Activated naive CD4-positive, alpha-beta T cell treated with anti-CD3 and anti-CD28 coated beads for 36 hours (primary cell): ENCODE measurements at regions of chr11 and their contacts with region 1.

Region 1: DNA sequence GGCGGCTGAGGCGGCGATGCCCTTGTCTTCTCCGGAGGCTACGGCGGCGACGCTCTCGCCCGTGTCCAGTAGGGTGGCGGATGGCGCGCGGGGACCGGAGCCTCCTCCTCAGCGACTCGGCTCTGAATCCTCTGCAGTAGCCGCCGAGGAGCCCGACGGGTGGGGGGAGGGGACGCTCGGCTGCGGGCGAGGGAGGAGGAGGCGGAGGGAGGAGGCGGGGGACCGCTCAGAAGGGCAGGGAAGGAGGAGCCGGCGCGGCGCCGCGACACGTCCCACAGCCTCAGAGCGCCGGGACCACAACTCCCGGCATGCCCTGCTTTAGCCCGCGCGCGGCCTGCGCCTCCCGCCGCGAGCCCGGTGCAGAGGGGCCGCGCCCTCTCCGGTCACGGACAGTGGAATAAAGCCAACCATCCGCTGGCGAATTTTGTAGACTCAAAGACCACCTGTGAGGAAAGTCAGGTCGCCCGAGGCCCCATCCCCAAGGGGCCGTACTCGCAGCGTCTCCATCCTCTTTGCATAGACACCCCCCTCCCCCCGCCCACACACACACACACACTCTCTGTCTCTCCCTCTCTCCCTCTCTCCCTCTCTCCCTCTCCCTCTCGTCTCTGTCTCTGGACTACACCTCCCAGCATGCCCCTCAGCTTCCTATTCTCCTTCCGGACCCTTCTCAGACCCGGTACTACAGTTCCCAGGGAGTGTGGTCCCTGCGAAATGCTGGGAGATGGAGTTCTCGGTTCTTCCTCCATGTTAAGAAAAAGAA is at the start of gene FAM168A:
- DNase-seq: peak; percentile 95
- H3K4me3 Mint-ChIP-seq: peak within 1 kb of the TSS; percentile 90
- H3K27ac Mint-ChIP-seq: peak within 1 kb of the TSS; percentile 84
- H3K4me1 Mint-ChIP-seq: peaks cover 30% of the 10 kb centered on the region
- H3K27me3 Mint-ChIP-seq: no peaks in the 10 kb centered on the region
- total RNA-seq, gene FAM168A: 11.9 to 13.0 TPM

Region 2: GRCh38 chr11:73376160-73376802 is 221.9 kb before region 1 on chr11 and contains the start of gene RELT:
- CTCF ChIA-PET with region 1: no interaction called
- intact Hi-C with region 1: loop called (anchors 1 kb)
- DNase-seq: peak; percentile 91
- H3K4me3 Mint-ChIP-seq: peak within 1 kb of the TSS; percentile 92
- H3K27ac Mint-ChIP-seq: peak within 1 kb of the TSS; percentile 91
- H3K4me1 Mint-ChIP-seq: peaks cover 45% of the 10 kb centered on the region
- H3K27me3 Mint-ChIP-seq: no peaks in the 10 kb centered on the region
- total RNA-seq, gene RELT: 17.9 to 18.5 TPM

Region 3: DNA sequence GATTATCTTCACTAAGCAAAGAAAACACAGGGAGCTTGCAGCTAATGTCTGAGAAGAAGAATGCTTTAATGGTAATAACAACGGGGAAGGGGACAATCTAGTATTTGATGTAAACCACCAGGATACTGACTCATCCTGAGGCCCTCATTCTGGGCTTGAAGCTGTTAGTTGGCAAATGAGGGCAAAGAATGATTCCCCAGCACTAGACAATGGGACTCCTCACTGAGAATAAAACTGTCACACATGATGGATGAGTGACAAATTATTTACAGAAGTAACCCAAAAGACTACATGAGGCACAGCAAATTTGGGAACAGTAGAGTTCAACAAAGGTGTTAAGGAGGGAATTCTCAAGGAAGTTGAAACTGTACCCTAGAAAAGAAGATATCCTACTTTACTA is 76.5 kb before region 1 on chr11:
- CTCF ChIA-PET with region 1: no interaction called
- intact Hi-C with region 1: loop called (anchors 1 kb)
- DNase-seq: peak; percentile 64
- H3K4me3 Mint-ChIP-seq: peak overlapping the region; percentile 28
- H3K27ac Mint-ChIP-seq: peak overlapping the region; percentile 88
- H3K4me1 Mint-ChIP-seq: peaks cover 35% of the 10 kb centered on the region
- H3K27me3 Mint-ChIP-seq: no peaks in the 10 kb centered on the region

Region 4: GRCh38 chr11:73578592-73579185 is 19.4 kb before region 1 on chr11:
- CTCF ChIA-PET with region 1: no interaction called
- intact Hi-C with region 1: loop called (anchors 1 kb)
- DNase-seq: peak; percentile 52
- H3K4me3 Mint-ChIP-seq: no peak overlapping the region
- H3K27ac Mint-ChIP-seq: peak overlapping the region; percentile 24
- H3K4me1 Mint-ChIP-seq: peaks cover 35% of the 10 kb centered on the region
- H3K27me3 Mint-ChIP-seq: no peaks in the 10 kb centered on the region

Region 5: DNA sequence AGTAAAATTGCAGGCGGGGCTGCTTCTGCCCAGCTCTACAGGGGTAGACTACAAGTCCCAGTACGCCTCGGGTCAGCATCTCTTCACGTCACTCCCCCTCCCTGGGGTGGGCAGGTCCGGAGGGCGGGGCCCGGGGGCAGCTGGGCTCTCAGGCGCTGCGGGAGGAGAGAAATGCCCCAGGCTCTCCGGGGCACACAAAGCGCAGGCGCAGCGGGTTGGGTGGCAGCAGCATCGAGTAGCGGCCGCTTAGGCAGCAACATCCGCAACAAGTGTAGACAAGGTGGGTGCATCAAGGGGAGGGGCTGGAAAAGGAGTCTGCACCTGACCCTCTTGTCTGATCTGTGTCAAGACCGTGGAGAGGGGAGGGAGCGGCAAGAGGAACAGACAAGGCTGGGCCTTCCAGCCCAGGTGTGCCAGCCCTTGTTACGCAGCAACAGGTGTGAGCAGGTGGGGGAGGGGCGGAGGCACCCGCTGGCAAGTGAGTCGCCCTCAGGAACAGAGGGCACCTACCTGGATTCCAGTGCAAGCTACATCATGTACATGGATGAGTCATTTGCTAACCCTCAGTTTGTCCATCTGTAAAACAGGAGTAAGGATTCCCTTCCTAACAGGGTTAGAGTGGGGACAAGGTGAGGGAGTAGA is 49.4 kb after region 1 on chr11:
- CTCF ChIA-PET with region 1: no interaction called
- intact Hi-C with region 1: loop called (anchors 1 kb)
- DNase-seq: peak; percentile 96
- H3K4me3 Mint-ChIP-seq: peak overlapping the region; percentile 80
- H3K27ac Mint-ChIP-seq: peak overlapping the region; percentile 63
- H3K4me1 Mint-ChIP-seq: peaks cover 18% of the 10 kb centered on the region
- H3K27me3 Mint-ChIP-seq: no peaks in the 10 kb centered on the region

Region 6: DNA sequence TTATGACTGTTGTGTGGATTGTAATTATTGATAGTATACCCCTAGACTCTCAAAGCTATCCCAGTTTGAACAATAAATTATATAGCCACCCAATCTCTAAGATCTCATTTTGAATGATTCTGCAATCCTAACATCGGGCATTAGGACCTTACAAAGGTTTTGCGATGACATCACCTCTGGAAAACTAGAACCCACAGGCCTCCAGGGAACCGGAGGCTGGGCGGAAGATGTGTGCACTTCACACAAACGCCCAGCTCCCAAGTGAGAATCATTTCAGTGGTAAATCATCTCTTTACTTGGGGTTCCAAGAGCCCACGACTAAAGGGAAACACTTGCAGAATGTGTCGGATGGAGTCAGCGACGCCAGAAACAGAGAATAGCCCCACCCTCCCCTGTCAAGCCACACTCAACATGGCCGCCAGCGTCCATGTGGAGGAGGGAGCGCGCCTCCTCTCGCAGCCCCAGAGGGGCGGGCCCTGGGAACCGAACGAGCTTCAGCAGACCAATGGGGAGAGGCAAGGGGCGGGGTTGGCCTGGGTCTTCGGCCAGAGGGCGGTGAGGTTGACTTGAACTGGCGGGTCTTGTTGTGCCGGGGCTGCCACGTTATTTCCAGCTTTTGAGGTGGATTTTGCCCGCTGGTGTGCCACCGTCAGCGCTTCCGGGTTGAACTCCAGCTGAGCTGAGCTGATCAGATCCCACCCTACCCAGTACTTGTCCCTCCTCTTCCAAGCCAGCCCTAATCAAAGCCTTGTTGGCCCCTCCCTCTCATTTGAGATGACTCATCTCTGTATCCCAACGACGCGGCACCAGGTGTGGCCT is 181.2 kb after region 1 on chr11:
- CTCF ChIA-PET with region 1: no interaction called
- intact Hi-C with region 1: loop called (anchors 1 kb)
- DNase-seq: peak; percentile 99
- H3K4me3 Mint-ChIP-seq: peak overlapping the region; percentile 85
- H3K27ac Mint-ChIP-seq: peak overlapping the region; percentile 98
- H3K4me1 Mint-ChIP-seq: peaks cover 14% of the 10 kb centered on the region
- H3K27me3 Mint-ChIP-seq: no peaks in the 10 kb centered on the region

Region 7: DNA sequence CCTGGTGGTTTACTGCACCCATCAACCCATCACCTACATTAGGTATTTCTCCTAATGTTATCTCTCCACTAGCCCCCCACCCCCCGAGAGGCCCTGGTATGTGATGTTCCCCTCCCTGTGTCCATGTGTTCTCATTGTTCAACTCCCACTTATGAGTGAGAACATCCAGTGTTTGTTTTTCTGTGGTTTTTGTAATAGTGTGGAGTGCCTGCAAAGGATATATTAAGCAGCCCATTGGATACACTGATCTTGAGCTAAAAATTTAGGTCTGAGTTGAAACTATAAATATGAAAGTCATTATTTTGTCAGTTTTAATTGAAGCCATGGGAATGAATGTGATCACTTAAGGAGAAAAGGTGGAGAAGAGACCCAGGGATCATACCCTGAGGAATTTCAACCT is 212.5 kb after region 1 on chr11:
- CTCF ChIA-PET with region 1: no interaction called
- intact Hi-C with region 1: no loop called
- DNase-seq: no peak
- H3K4me3 Mint-ChIP-seq: no peak overlapping the region
- H3K27ac Mint-ChIP-seq: no peak overlapping the region
- H3K4me1 Mint-ChIP-seq: no peaks in the 10 kb centered on the region
- H3K27me3 Mint-ChIP-seq: no peaks in the 10 kb centered on the region

Region 8: DNA sequence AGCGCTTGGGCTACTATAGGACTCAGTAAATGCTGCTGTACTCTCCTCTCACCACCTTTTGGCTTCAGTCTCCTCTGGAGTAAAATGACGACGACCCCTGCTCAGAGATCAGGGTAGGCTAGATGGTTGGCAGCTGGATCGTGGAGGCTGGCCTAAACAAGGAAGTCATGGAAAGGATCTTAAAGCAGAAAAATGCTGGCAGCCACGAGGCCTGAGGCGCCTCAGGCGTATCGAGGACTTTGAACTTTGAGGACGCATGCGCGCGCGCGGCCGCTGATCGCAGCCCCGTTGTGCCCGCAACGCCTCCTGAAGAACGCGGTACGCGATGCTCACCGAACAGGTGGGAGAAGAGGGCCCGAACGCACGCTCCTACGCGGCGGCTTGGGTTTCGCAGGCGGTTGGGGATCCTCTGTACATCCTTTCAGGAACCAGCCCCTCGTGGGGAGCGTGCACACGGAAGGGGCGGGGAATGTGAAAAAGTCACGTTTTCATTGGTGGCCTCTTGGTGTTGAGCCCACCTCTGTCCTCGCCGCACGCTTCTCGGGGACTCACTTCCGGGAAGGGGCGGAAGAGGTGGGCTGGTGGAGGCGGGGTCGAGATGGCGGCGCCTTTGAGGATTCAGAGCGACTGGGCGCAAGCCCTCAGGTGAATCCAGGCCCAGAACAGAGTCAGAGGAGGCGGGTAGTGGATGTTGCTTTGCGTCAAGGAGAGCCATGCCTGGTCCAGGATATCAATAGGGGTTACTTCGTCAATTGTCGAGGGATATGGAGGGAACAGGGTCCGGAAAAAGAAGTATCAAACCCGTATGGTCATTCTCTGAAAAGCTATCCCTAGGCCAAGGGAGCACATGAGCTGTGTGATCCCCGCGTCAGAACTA is 278.5 kb after region 1 on chr11 and contains the starts of genes COA4 and PAAF1:
- CTCF ChIA-PET with region 1: no interaction called
- intact Hi-C with region 1: loop called (anchors 1 kb)
- DNase-seq: peak; percentile 97
- H3K4me3 Mint-ChIP-seq: peak within 1 kb of the TSS; percentile 95
- H3K27ac Mint-ChIP-seq: peak within 1 kb of the TSS; percentile 92
- H3K4me1 Mint-ChIP-seq: peaks cover 42% of the 10 kb centered on the region
- H3K27me3 Mint-ChIP-seq: no peaks in the 10 kb centered on the region
- total RNA-seq, gene COA4: 87.8 to 94.2 TPM
- total RNA-seq, gene PAAF1: 29.7 to 30.4 TPM